ENCODE measurements at regions of chr6 and their contacts with region 1.

Region 1: DNA sequence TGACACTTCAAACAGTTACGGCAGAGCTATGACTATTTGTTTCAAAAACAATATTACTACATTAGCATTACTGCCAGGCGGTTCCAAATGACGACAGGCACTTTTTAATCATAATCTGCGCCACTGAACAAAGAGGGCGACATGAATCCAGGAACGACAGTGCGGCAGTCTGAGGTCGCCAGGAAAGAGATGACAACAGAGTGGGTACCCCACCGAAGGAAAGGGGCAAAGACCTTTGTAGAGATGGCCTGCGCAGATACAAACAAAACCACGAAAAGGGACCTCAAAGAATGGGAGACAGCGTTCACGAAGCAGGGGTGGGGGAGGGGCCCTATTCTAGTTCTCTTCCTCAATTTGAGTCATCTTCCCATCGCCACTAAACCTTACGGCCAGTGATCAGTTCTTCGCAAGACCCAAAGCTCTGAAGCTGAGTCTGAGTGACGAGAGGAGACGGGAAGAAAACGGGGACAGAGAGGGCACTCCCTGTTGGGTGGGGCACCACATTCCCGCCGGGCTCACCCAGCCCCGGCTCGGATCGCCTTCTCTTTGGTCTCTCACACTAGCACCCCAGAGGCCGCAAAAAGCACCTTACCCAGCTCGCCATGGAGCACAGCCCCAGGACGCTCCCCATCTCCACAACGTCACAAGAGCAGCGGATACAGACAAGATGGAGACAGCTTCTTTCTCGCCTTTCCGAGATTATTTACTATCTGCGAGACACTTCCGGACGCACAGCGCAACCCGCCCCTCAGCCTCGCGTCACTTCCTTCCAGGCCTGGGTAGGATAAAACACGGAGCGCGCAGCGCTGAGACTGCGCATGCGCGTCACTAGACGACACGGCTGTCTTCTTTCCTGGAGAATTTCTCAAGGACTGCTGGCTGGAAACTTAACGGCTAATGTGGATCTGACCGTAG is at the start of gene SERINC1:
- DNase-seq: peak; percentile 98
- H3K4me3 ChIP-seq: peak within 1 kb of the TSS; percentile 81 to 92 (median 86)
- H3K27ac ChIP-seq: peak within 1 kb of the TSS; percentile 93 to 97 (median 96)
- H3K4me1 ChIP-seq: peaks cover 18 to 46% (median 44%) of the 10 kb centered on the region in 4 donors
- H3K27me3 ChIP-seq: no peaks in the 10 kb centered on the region
- CTCF ChIP-seq: no peak
- EP300 ChIP-seq: no peak
- POLR2A ChIP-seq: peak; percentile 73
- total RNA-seq, gene SERINC1: 215 to 314 (median 276) TPM

Region 2: DNA sequence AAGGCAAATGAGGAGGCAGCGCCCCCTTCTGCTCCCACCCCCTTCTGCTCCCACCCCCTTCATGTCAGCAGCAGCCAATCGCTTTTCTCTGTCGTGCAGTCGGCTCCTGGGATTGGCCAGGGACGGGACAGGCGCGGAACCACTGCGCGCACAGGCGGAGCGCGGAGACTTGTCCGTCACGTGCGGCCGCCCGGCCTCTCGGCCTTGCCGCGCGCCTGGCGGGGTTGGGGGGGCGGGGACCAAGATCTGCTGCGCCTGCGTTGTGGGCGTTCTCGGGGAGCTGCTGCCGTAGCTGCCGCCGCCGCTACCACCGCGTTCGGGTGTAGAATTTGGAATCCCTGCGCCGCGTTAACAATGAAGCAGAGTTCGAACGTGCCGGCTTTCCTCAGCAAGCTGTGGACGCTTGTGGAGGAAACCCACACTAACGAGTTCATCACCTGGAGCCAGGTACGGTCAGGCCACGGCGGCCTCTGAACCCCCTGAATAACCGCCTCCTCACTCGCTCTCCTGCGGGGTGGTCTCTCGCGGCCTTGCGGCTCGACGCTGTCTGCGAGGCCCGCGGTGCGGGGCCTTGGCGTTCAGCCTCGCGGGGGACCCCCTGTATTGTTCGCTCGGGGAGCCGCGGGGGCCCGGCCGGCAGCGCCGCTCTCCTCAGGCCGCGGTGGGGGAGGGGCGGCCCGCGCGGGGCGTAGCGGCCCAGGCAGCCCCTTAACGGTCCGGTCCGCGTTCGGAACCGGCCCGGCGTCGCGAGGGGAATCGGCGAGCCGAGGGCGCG is 71.8 kb before region 1 on chr6 and contains the start of gene HSF2:
- intact Hi-C with region 1: loop called (anchors 5 kb)
- DNase-seq: peak; percentile 99
- H3K4me3 ChIP-seq: peak within 1 kb of the TSS; percentile 76 to 97 (median 95)
- H3K27ac ChIP-seq: peak within 1 kb of the TSS; percentile 92 to 97 (median 95)
- H3K4me1 ChIP-seq: peaks cover 5 to 55% (median 50%) of the 10 kb centered on the region in 4 donors
- H3K27me3 ChIP-seq: no peaks in the 10 kb centered on the region
- CTCF ChIP-seq: peak; percentile 19 to 33 (median 26)
- EP300 ChIP-seq: no peak
- POLR2A ChIP-seq: no peak
- total RNA-seq, gene HSF2: 26.8 to 29.9 (median 28.4) TPM

Region 3: GRCh38 chr6:122548281-122548680 is 76.9 kb after region 1 on chr6:
- intact Hi-C with region 1: no loop called
- DNase-seq: no peak
- H3K4me3 ChIP-seq: no peak overlapping the region
- H3K27ac ChIP-seq: no peak overlapping the region
- H3K4me1 ChIP-seq: no peaks in the 10 kb centered on the region
- H3K27me3 ChIP-seq: no peaks in the 10 kb centered on the region
- CTCF ChIP-seq: no peak
- EP300 ChIP-seq: no peak
- POLR2A ChIP-seq: no peak

Region 4: DNA sequence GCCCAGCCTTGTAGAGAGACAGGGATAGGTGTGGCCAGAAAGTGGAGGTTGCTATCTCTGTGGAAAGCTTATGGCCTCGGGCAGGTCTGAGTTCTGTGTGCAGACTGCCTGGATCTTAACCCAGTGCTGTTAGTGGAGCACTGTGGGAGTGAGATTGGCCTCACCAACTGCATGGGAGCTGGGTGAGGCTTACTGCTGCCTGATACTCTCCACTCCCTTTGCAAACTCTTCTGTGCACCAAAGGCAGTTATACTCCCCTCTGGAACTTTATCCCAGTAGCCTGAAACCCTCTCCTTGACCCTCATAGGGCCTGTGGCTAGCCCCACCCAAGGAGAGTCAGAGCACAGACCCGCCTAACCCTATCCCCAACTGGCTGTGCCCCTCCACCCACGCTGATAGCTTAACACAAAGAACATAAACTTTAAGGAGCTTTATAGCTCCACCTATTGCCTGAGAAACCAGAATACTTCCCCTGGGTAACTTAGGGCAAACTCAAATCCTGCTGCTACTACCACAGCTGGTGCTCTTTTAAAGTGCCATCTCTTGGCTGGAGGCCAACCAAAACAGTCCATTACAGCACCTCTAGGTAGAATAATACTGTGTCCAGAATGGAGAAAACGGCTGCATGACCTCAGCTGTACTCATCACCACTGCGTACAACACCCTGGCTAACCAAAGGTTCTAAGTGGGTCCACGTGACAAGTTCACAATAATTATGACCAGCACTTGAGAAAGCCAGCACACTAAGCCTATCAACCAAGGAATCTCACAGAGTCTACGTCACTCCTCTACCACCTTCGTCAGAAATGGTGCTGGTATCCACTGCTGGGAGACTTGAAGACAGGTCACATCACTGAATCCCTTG is 97.7 kb after region 1 on chr6:
- intact Hi-C with region 1: no loop called
- DNase-seq: no peak
- H3K4me3 ChIP-seq: no peak overlapping the region
- H3K27ac ChIP-seq: no peak overlapping the region
- H3K4me1 ChIP-seq: no peaks in the 10 kb centered on the region
- H3K27me3 ChIP-seq: no peaks in the 10 kb centered on the region
- CTCF ChIP-seq: no peak
- EP300 ChIP-seq: no peak
- POLR2A ChIP-seq: no peak